Activated T-helper 2 cell treated with anti-CD3 and anti-CD28 coated beads, Interferon-gamma antibody, Interleukin-2, Interleukin-4, amounts not matched to agents 10 μg/mL and 5 μg/mL and 100 μg/mL, durations not matched to agents 14 hours and 24 hours and 36 hours (primary cell): ENCODE measurements at regions of chr12 and their contacts with region 1.

Region 1: GRCh38 chr12:55926738-55927587 is 731 bp downstream of the PYM1 start:
- DNase-seq: peak; percentile 88
- H3K4me3 Mint-ChIP-seq: peak overlapping the region; percentile 99
- H3K27ac Mint-ChIP-seq: peak overlapping the region; percentile 91
- H3K4me1 Mint-ChIP-seq: peaks cover 53% of the 10 kb centered on the region
- H3K27me3 Mint-ChIP-seq: no peaks in the 10 kb centered on the region

Region 2: GRCh38 chr12:55492078-55492477 is 434.9 kb before region 1 on chr12 and contains the start of gene OR6C68:
- intact Hi-C with region 1: no loop called
- DNase-seq: no peak
- H3K4me3 Mint-ChIP-seq: no peak within 1 kb of the TSS
- H3K27ac Mint-ChIP-seq: no peak within 1 kb of the TSS
- H3K4me1 Mint-ChIP-seq: no peaks in the 10 kb centered on the region
- H3K27me3 Mint-ChIP-seq: peaks cover 4% of the 10 kb centered on the region
- total RNA-seq, gene OR6C68: not detected in 2 replicates

Region 3: GRCh38 chr12:55738123-55739024 is 188.6 kb before region 1 on chr12:
- intact Hi-C with region 1: loop called (anchors 1 kb)
- DNase-seq: peak; percentile 69
- H3K4me3 Mint-ChIP-seq: peak overlapping the region; percentile 78
- H3K27ac Mint-ChIP-seq: peak overlapping the region; percentile 74
- H3K4me1 Mint-ChIP-seq: peaks cover 29% of the 10 kb centered on the region
- H3K27me3 Mint-ChIP-seq: no peaks in the 10 kb centered on the region

Region 4: DNA sequence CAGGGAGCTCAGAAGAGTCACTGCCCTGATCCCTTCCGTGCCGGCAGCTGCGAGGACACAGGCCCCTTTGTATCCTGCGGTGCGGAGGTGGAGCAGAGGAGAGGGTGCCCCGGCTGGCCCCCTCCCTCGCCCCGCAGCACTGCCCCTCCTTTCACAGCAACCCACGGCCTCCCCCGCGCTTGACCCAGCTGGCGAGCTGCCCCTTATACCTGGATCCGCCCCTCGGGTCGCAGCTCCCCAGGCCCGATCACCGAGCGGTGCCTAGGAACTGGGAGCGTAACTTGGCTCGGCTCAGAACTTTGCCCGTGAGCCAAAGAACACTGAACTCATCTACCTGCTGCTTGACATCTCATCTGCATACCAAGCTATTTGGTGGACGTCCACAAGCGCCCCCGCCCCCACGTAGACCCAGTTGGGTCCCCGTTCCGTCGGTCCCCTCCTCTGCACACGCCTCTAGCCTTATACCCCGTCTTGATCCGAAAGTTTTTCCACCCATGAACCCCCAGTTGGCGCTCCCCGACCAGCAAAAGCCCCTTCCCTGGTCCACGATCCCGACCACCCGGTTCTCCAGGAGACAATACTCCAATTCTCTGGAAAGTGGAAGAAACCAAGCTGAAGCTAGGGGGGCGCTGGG is 96.9 kb before region 1 on chr12:
- intact Hi-C with region 1: loop called (anchors 1 kb)
- DNase-seq: peak; percentile 16
- H3K4me3 Mint-ChIP-seq: peak overlapping the region; percentile 97
- H3K27ac Mint-ChIP-seq: peak overlapping the region; percentile 89
- H3K4me1 Mint-ChIP-seq: peaks cover 36% of the 10 kb centered on the region
- H3K27me3 Mint-ChIP-seq: no peaks in the 10 kb centered on the region

Region 5: DNA sequence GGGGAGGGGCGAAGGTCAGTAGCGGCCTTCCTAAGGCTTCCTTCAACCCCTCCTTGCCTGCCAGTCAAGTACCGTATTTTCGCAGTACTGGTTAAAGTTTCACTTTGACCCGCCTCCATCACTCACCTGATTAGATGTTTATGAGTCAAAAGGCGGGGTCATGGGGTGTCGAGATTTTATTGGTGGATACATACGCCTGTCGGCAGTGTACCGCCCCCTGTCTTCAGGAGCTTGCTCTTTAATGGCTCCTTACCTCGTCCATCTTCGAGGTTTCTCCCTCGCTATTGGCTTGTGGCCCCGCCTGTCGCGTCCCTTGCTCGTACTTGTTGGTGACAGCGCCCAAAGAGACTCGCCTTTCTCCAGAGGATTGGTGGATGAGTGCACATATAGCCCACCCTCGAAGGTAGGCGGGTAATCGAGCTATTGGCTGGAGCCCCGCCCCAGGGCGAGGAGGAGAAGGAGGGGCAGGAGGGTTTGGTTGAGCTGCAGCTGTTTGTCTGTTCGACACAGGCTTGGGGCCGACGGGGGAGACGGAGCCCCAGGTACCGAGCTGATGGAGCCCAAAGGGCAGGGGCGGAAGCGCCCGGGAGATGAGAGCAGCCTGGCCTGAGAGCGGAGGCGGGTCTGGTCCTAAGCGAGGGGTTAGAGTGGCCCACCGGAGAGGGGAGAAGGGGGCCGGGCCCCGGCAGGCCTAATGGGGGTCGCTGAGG is 46.8 kb after region 1 on chr12 and contains the start of gene RAB5B:
- intact Hi-C with region 1: loop called (anchors 1 kb)
- DNase-seq: peak; percentile 99
- H3K4me3 Mint-ChIP-seq: no peak within 1 kb of the TSS
- H3K27ac Mint-ChIP-seq: no peak within 1 kb of the TSS
- H3K4me1 Mint-ChIP-seq: peaks cover 26% of the 10 kb centered on the region
- H3K27me3 Mint-ChIP-seq: no peaks in the 10 kb centered on the region
- total RNA-seq, gene RAB5B: 47.9 and 51.0 TPM in 2 replicates

Region 6: GRCh38 chr12:56104109-56104814 is 177.3 kb after region 1 on chr12 and contains the start of gene PA2G4:
- intact Hi-C with region 1: loop called (anchors 1 kb)
- DNase-seq: peak; percentile 99
- H3K4me3 Mint-ChIP-seq: peak within 1 kb of the TSS; percentile 92
- H3K27ac Mint-ChIP-seq: peak within 1 kb of the TSS; percentile 95
- H3K4me1 Mint-ChIP-seq: peaks cover 51% of the 10 kb centered on the region
- H3K27me3 Mint-ChIP-seq: no peaks in the 10 kb centered on the region
- total RNA-seq, gene PA2G4: 356 and 364 TPM in 2 replicates